K562 (cell line): ENCODE measurements at regions of chr19 and their contacts with region 1.

Region 1: GRCh38 chr19:46850228-46851203 is at the start of gene AP2S1:
- DNase-seq: peak; percentile 87 to 97 (median 91)
- ATAC-seq: peak; percentile 95
- H3K4me3 ChIP-seq: peak within 1 kb of the TSS; percentile 92
- H3K27ac ChIP-seq: peak within 1 kb of the TSS; percentile 88
- H3K4me1 ChIP-seq: peaks cover 14 to 29% of the 10 kb centered on the region in 2 experiments
- H3K27me3 ChIP-seq: no peaks in the 10 kb centered on the region
- CTCF ChIP-seq: no peak; a peak in 1 of 6 replicates
- EP300 ChIP-seq: no peak
- POLR2A ChIP-seq: peak; percentile 82
- RAD21 ChIP-seq: no peak
- polyA plus RNA-seq, gene AP2S1: 32.4 to 72.0 TPM

Region 2: DNA sequence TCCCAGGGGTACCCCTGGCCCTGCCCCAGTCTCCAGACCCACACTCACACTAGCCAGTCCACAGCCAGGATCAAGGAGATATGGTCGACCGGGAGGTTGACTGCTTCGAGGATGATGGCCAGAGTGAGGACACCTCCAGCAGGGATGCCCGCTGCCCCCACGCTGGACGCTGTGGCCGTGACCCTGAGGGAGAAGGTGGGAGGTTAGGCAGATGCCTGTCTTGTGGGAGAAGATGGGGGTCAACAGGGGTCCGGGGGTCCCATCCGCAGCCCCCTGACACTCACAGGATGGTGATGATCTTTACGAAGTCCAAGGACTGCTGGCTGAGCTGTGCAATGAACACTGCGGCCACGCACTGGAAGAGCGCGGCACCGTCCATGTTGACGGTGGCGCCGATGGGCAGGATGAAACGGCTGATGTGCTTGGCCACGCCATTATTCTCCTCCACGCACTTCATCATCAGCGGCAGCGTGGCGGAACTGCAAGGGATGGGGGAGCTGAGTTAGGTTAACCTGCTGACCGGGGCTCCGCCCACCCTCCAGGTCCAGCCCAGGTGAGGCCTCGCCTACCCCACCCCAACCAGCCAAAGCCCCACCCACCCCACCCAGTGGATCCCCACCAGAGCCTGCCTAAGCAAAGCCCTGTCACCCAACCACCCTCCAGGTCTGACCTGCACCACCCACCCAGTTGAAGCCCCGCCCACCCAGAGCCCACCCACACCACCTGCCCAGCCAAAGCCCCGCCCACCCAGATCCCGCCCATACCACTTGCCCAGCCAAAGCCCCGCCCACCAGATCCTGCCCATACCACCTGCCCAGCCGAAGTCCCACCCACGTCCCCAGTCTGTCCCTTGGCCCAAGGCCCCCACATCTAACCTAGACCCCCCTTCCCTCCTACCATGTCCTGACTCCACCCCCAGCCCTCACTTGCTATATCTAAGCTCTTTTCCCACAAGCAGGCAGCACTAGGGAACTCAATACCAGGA is 73.3 kb before region 1 on chr19:
- CTCF ChIA-PET with region 1: no interaction called
- POLR2A ChIA-PET with region 1: no interaction called
- in situ Hi-C with region 1: no loop called
- intact Hi-C with region 1: no loop called
- DNase-seq: peak; percentile 68 to 88 (median 84)
- ATAC-seq: peak; percentile 55
- H3K4me3 ChIP-seq: no peak overlapping the region
- H3K27ac ChIP-seq: no peak overlapping the region
- H3K4me1 ChIP-seq: peaks cover 0 to 16% of the 10 kb centered on the region in 2 experiments; a peak in 3 of 5 replicates
- H3K27me3 ChIP-seq: no peaks in the 10 kb centered on the region
- CTCF ChIP-seq: no peak
- EP300 ChIP-seq: no peak
- POLR2A ChIP-seq: peak; percentile 58
- RAD21 ChIP-seq: no peak

Region 3: GRCh38 chr19:46990991-46991676 is 140.6 kb after region 1 on chr19:
- CTCF ChIA-PET with region 1: interaction called, 15 read pairs
- POLR2A ChIA-PET with region 1: no interaction called
- in situ Hi-C with region 1: loop called (anchors 5 kb)
- intact Hi-C with region 1: no loop called
- DNase-seq: peak; percentile 73 to 86 (median 80)
- ATAC-seq: peak; percentile 92
- H3K4me3 ChIP-seq: no peak overlapping the region
- H3K27ac ChIP-seq: peak overlapping the region; percentile 24; the same call in 2 of the 3 replicates
- H3K4me1 ChIP-seq: peaks cover 8 to 28% of the 10 kb centered on the region in 2 experiments; a peak in 4 of 5 replicates
- H3K27me3 ChIP-seq: no peaks in the 10 kb centered on the region
- CTCF ChIP-seq: peak; percentile 88 to 92 (median 91)
- EP300 ChIP-seq: 0 out of 2 replicates have a peak, but pooled peaks have one; percentile 14
- POLR2A ChIP-seq: no peak
- RAD21 ChIP-seq: peak; percentile 86 to 95

Region 4: GRCh38 chr19:47005873-47006272 is 155.4 kb after region 1 on chr19:
- CTCF ChIA-PET with region 1: no interaction called
- POLR2A ChIA-PET with region 1: no interaction called
- in situ Hi-C with region 1: no loop called
- intact Hi-C with region 1: no loop called
- DNase-seq: peak in 1 of 4 experiments; percentile 19
- ATAC-seq: peak; percentile 9; the same call in 2 of the 3 replicates
- H3K4me3 ChIP-seq: no peak overlapping the region
- H3K27ac ChIP-seq: no peak overlapping the region
- H3K4me1 ChIP-seq: peaks cover 5 to 28% of the 10 kb centered on the region in 2 experiments
- H3K27me3 ChIP-seq: no peaks in the 10 kb centered on the region
- CTCF ChIP-seq: no peak
- EP300 ChIP-seq: no peak
- POLR2A ChIP-seq: no peak
- RAD21 ChIP-seq: no peak

Region 5: DNA sequence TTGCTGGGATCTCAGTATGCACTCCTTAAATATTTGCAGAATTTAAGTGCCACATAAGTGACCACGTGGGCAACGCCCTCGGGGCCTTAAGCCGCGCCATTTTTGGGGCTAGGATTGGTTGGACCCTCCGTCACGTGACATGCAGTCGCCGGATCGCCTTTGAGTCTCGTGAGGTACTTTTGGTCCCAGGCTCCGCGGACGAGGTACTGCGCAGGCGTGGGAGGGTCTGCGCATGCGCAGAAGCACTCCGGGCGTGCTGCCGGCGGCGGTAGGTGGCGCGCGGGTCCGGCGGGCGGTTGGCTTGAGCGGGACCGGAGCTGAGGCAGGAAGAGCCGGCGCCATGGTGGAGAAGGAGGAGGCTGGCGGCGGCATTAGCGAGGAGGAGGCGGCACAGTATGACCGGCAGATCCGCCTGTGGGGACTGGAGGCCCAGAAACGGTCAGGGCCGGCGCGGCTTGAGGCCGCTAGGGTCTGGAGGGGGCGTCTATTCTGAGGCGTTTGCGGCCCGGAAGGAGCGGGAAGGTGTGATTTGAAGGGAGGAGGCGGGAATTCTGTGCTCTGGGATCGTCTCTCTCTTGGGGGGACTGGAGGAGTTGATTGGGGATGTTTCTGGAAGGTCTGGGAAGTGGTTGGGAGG is 280.2 kb after region 1 on chr19 and contains the start of gene SAE1:
- CTCF ChIA-PET with region 1: no interaction called
- POLR2A ChIA-PET with region 1: no interaction called
- in situ Hi-C with region 1: loop called (anchors 10 kb)
- intact Hi-C with region 1: loop called (anchors 5 kb)
- DNase-seq: peak; percentile 96 to 99 (median 98)
- ATAC-seq: peak; percentile 90
- H3K4me3 ChIP-seq: peak within 1 kb of the TSS; percentile 68
- H3K27ac ChIP-seq: peak within 1 kb of the TSS; percentile 92
- H3K4me1 ChIP-seq: peaks cover 20 to 31% of the 10 kb centered on the region in 2 experiments; a peak in 4 of 5 replicates
- H3K27me3 ChIP-seq: no peaks in the 10 kb centered on the region
- CTCF ChIP-seq: peak; percentile 67 to 70 (median 69)
- EP300 ChIP-seq: peak; percentile 32; the same call in 1 of the 2 replicates
- POLR2A ChIP-seq: peak; percentile 94
- RAD21 ChIP-seq: peak; percentile 27 to 44
- polyA plus RNA-seq, gene SAE1: 82.8 to 133 TPM